ENCODE measurements at regions of chr16 and their contacts with region 1.

Region 1: DNA sequence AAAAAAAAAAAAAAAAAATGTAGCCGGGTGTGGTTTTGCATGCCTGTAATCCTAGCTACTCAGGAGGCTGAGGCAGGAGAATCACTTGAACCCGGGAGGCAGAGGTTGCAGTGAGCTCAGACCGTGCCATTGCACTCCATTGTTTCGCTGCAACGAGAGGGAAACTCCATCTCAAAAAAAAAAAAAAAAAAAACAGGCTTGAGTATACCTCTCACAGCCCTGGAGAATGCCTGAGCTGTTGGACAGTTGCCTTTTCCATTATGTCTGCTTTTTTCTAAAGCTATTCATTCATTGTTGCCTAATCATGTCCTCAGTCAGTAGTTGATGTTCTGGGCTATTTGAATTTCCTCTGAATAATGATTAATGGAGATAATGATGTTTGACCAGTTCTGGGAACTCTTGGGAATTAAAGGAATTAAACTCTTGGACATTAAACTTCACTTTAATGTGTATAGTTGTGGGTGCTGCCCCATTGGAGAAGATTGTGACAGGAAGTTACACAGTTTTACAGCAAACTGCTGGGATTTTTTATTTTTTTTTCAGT is 11.8 kb downstream of the HMOX2 start:
- DNase-seq: no peak
- H3K4me3 Mint-ChIP-seq: no peak overlapping the region
- H3K27ac Mint-ChIP-seq: no peak overlapping the region
- H3K4me1 Mint-ChIP-seq: peaks cover 47% of the 10 kb centered on the region
- H3K27me3 Mint-ChIP-seq: no peaks in the 10 kb centered on the region
- CTCF ChIP-seq: no peak

Region 2: DNA sequence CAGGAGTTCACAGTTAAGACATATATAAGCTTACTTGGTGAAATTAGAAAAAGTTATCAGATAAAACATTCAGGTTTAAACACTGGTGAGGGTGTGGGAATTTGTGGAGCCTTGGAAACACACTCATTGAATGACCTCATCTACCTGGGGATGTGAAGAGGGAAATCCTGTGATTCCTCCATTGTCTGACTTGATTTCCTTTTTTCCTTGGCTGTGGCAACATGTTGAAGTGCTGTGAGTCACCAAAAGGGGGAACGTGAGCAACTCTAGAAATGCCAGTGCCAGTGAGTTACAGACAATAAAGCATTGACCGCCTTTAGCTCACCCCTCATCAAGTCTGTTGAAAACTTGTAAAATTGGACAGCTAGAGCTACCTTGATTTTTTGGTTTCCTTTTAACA is 10.1 kb before region 1 on chr16:
- CTCF ChIA-PET with region 1: interaction called, 14 read pairs
- intact Hi-C with region 1: no loop called
- DNase-seq: peak; percentile 52
- H3K4me3 Mint-ChIP-seq: peak overlapping the region; percentile 82
- H3K27ac Mint-ChIP-seq: peak overlapping the region; percentile 79
- H3K4me1 Mint-ChIP-seq: peaks cover 17% of the 10 kb centered on the region
- H3K27me3 Mint-ChIP-seq: no peaks in the 10 kb centered on the region
- CTCF ChIP-seq: no peak

Measured in Calu3 (cell line).